ENCODE measurements at regions of chr2 and their contacts with region 1.

Region 1: DNA sequence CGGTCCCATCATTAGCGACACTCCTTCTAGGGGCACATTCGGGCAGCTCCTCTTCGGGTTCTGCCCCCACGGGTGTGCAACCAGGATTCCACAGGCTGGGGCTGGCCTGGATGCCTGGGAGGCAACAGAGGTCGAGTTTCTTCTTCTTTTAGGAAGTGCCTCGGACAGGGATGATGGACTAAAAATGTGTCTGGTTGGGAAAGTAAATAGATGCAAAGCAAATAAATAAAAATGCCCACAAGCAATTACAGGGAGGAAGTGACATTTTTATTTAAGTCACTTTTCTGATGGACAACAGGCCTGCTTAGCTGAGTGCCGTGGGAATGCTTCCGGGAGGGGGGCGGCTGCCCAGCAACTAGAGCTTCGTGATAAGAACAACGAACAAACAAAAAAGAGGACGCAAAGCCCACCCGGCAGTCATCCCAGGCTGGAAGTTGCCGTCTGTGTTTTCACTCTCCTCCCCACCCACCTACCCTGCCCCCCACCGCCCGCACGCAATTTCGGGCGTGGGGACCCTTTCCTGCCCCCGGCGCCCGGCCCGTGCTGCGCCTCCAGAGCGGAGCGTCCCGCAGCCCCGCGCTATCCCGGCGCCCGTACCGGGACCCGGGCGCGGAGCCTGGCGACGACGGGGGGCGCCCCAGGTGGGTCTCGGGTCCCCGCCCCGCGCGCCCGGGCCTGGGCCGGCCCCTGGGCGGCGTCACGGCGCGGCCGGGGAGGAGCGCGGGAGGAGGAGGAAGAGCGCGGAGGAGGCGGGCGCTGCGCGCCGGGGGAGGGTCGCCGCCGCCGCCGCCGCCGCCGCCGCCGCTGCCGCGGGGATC is 412 bp upstream of the NCK2 start:
- DNase-seq: peak; percentile 49
- H3K4me3 ChIP-seq: peak overlapping the region; percentile 76 to 92
- H3K27ac ChIP-seq: peak overlapping the region; percentile 89 to 92
- H3K4me1 ChIP-seq: no peaks in the 10 kb centered on the region
- H3K27me3 ChIP-seq: no peaks in the 10 kb centered on the region
- CTCF ChIP-seq: no peak
- POLR2A ChIP-seq: peak; percentile 19

Region 2: GRCh38 chr2:105789745-105790460 is 45.6 kb after region 1 on chr2:
- intact Hi-C with region 1: loop called (anchors 5 kb)
- DNase-seq: no peak
- H3K4me3 ChIP-seq: no peak overlapping the region
- H3K27ac ChIP-seq: no peak overlapping the region
- H3K4me1 ChIP-seq: peaks cover 5% of the 10 kb centered on the region
- H3K27me3 ChIP-seq: no peaks in the 10 kb centered on the region
- CTCF ChIP-seq: peak in 1 of 4 experiments; percentile 22
- POLR2A ChIP-seq: no peak

Region 3: DNA sequence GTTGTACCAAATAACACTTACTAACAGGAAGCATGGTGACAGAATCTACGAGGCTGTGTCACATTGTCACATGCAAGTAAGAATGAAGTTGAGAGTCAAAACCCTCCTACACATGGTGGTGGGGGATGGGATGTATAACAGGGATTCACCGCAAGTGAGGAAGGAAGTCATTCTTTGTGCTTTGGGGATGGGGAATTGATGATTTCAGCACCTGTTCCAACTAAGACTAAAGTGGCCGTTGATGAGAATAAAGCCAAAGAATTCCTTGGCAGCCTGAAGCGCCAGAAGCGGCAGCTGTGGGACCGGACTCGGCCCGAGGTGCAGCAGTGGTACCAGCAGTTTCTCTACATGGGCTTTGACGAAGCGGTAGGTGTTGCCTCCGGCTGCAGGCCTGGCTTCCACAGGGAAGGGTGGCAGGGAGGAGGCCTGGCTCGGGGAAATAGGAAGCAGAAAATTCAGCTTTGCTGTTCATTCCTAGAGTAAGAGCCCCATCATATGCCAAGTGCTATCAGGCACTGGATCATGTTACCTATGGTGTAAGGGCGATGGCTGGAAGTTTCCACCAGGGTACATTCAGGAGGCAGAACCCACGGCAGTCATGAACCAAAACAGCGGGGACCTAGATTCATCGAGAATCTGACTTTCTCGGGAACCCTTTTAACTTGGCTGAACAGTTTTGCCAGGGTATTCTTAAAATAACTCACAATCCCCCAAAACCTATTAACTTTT is 329.5 kb after region 1 on chr2:
- intact Hi-C with region 1: loop called (anchors 5 kb)
- DNase-seq: no peak
- H3K4me3 ChIP-seq: no peak overlapping the region
- H3K27ac ChIP-seq: no peak overlapping the region
- H3K4me1 ChIP-seq: no peaks in the 10 kb centered on the region
- H3K27me3 ChIP-seq: no peaks in the 10 kb centered on the region
- CTCF ChIP-seq: no peak
- POLR2A ChIP-seq: no peak